ENCODE measurements at regions of chr20 and their contacts with region 1.

Region 1: GRCh38 chr20:44885392-44886265 is at the start of gene YWHAB:
- DNase-seq: peak; percentile 98
- H3K4me3 ChIP-seq: peak within 1 kb of the TSS; percentile 89 to 98 (median 97)
- H3K27ac ChIP-seq: peak within 1 kb of the TSS; percentile 84
- H3K4me1 ChIP-seq: peaks cover 33% of the 10 kb centered on the region
- H3K27me3 ChIP-seq: no peaks in the 10 kb centered on the region
- CTCF ChIP-seq: no peak
- POLR2A ChIP-seq: peak; percentile 54
- total RNA-seq, gene YWHAB: 255 and 256 TPM in 2 replicates

Region 2: GRCh38 chr20:44642203-44643153 is 243.2 kb before region 1 on chr20:
- CTCF ChIA-PET with region 1: no interaction called
- POLR2A ChIA-PET with region 1: no interaction called
- dilution Hi-C with region 1: no loop called
- intact Hi-C with region 1: loop called (anchors 1 kb)
- DNase-seq: peak; percentile 89
- H3K4me3 ChIP-seq: no peak overlapping the region
- H3K27ac ChIP-seq: peak overlapping the region; percentile 98
- H3K4me1 ChIP-seq: peaks cover 48% of the 10 kb centered on the region
- H3K27me3 ChIP-seq: no peaks in the 10 kb centered on the region
- CTCF ChIP-seq: no peak
- POLR2A ChIP-seq: peak; percentile 21

Region 3: DNA sequence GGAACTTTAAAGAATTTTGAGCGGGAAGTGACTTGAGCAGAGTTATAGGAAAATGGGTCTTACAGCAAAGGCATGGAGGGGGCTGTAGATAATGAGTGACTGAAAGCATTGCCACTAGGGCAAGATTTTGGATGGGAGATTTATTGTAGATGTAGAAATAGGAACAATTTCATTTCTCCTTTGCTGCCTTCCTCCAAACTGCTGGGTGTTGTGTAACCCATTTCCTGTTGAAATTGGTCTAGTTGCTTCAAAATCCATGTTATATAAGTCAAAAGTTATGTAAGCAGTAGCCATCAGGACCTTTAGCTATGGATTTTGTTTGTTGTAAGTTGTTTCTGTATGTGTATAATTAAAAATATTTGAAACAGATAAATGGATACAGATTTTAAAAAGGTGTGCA is 11.0 kb after region 1 on chr20:
- CTCF ChIA-PET with region 1: interaction called, 12 read pairs
- POLR2A ChIA-PET with region 1: interaction called, 3 read pairs
- dilution Hi-C with region 1: no loop called
- intact Hi-C with region 1: loop called (anchors 2 kb)
- DNase-seq: no peak
- H3K4me3 ChIP-seq: no peak overlapping the region
- H3K27ac ChIP-seq: no peak overlapping the region
- H3K4me1 ChIP-seq: peaks cover 12% of the 10 kb centered on the region
- H3K27me3 ChIP-seq: no peaks in the 10 kb centered on the region
- CTCF ChIP-seq: no peak
- POLR2A ChIP-seq: no peak

Region 4: DNA sequence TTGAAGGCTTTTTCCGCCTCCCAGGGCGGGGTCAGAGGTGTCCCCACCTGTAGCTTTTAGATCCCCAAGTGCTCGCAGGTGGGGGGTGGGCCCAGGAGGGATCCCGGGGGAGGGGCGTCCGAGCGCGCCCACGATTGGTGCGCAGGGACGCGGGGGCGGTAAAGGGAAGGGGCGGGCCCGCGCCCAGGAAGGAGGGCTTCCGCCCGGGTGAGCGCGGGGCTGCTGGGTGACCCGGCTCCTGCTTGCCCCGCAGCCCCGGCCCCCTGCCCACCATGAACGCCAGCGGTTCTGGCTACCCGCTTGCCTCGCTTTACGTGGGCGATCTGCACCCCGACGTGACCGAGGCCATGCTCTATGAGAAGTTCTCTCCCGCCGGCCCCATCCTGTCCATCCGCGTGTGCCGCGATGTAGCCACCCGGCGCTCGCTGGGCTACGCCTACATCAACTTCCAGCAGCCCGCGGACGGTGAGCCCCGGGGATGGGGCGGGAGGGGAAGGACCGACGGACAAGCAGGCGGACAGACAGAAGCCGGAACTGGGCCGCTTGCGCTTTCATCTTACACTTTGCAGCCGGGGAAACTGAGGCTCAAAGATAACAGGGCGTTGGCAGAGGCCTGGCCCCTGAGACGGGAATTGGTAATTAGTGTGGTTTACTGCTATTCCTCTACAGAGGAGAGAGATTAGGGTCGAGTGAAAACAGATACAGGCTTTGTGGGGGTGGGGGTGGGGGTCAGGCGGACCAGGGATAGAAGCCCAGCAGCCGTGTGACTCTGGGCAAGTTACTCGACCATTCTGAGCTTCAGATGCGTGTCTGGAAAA is 24.5 kb after region 1 on chr20 and contains the start of gene PABPC1L:
- CTCF ChIA-PET with region 1: interaction called, 8 read pairs
- POLR2A ChIA-PET with region 1: interaction called, 3 read pairs
- dilution Hi-C with region 1: no loop called
- intact Hi-C with region 1: loop called (anchors 1 kb)
- DNase-seq: no peak
- H3K4me3 ChIP-seq: peak within 1 kb of the TSS; percentile 43 to 62 (median 51)
- H3K27ac ChIP-seq: no peak within 1 kb of the TSS
- H3K4me1 ChIP-seq: peaks cover 12% of the 10 kb centered on the region
- H3K27me3 ChIP-seq: no peaks in the 10 kb centered on the region
- CTCF ChIP-seq: no peak
- POLR2A ChIP-seq: peak; percentile 47
- total RNA-seq, gene PABPC1L: 7.5 and 7.8 TPM in 2 replicates

Region 5: GRCh38 chr20:44924570-44924969 is 38.9 kb after region 1 on chr20:
- CTCF ChIA-PET with region 1: no interaction called
- POLR2A ChIA-PET with region 1: no interaction called
- dilution Hi-C with region 1: no loop called
- intact Hi-C with region 1: no loop called
- DNase-seq: no peak
- H3K4me3 ChIP-seq: no peak overlapping the region
- H3K27ac ChIP-seq: no peak overlapping the region
- H3K4me1 ChIP-seq: no peaks in the 10 kb centered on the region
- H3K27me3 ChIP-seq: no peaks in the 10 kb centered on the region
- CTCF ChIP-seq: no peak
- POLR2A ChIP-seq: no peak

Region 6: GRCh38 chr20:45095753-45096371 is 210.2 kb after region 1 on chr20:
- CTCF ChIA-PET with region 1: interaction called, 3 read pairs
- POLR2A ChIA-PET with region 1: no interaction called
- dilution Hi-C with region 1: no loop called
- intact Hi-C with region 1: loop called (anchors 5 kb)
- DNase-seq: peak; percentile 52
- H3K4me3 ChIP-seq: no peak overlapping the region
- H3K27ac ChIP-seq: no peak overlapping the region
- H3K4me1 ChIP-seq: peaks cover under 1% of the 10 kb centered on the region
- H3K27me3 ChIP-seq: peaks cover 23 to 30% of the 10 kb centered on the region in 2 experiments
- CTCF ChIP-seq: peak; percentile 53 to 79
- POLR2A ChIP-seq: no peak

Measured in endothelial cell of umbilical vein (primary cell).